Heart right ventricle (tissue), 16 donors: ENCODE measurements at regions of chr1 and their contacts with region 1.

Region 1: GRCh38 chr1:56409094-56409691 is 170.2 kb downstream of the PLPP3 start:
- DNase-seq: peak in 1 of 2 donors; percentile 17
- ATAC-seq: peak in 2 of 8 donors; percentile 22 to 41
- H3K4me3 ChIP-seq: no peak overlapping the region
- H3K27ac ChIP-seq: no peak overlapping the region
- H3K4me1 ChIP-seq: peaks cover 0 to 53% (median 14%) of the 10 kb centered on the region in 9 donors
- H3K27me3 ChIP-seq: no peaks in the 10 kb centered on the region
- CTCF ChIP-seq: peak in 8 of 9 donors; percentile 26 to 54 (median 45)

Region 2: GRCh38 chr1:56189946-56190792 is 219.0 kb before region 1 on chr1:
- intact Hi-C with region 1: loop called in 2 of 10 experiments (anchors 5 kb)
- DNase-seq: peak in 1 of 2 donors; percentile 40
- ATAC-seq: peak in 7 of 8 donors; percentile 63 to 92 (median 81)
- H3K4me3 ChIP-seq: no peak overlapping the region
- H3K27ac ChIP-seq: peak overlapping the region in 5 of 10 donors; percentile 35 to 54 (median 38)
- H3K4me1 ChIP-seq: peaks cover 0 to 39% (median 19%) of the 10 kb centered on the region in 9 donors
- H3K27me3 ChIP-seq: no peaks in the 10 kb centered on the region
- CTCF ChIP-seq: peak; percentile 11 to 70 (median 51)

Region 3: GRCh38 chr1:56284928-56285327 is 124.3 kb before region 1 on chr1:
- intact Hi-C with region 1: loop called in 2 of 10 experiments (anchors 2 to 10 kb)
- DNase-seq: peak in 1 of 2 donors; percentile 23
- ATAC-seq: peak in 7 of 8 donors; percentile 64 to 86 (median 79)
- H3K4me3 ChIP-seq: no peak overlapping the region
- H3K27ac ChIP-seq: peak overlapping the region in 7 of 10 donors; percentile 5 to 73 (median 51)
- H3K4me1 ChIP-seq: peaks cover 0 to 35% (median 18%) of the 10 kb centered on the region in 9 donors
- H3K27me3 ChIP-seq: no peaks in the 10 kb centered on the region
- CTCF ChIP-seq: no peak

Region 4: DNA sequence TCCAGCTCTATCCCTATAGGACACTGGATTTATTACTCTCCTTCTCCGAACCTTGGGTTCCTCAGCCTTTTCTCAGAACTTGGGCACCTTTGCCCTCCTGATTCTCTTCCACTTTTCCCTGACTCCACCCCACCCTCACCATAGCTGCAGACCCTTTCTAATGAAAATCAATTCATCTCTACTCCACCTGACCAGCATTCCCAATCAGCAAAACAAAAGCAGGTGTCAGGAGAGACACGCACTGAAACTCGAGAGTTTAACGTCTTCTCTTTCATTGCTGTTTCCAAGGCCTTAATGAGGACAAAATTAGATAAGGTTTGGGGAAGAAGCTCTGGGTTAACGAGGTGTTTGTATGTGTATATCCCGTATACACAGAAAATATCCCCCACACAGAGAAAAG is 38.7 kb before region 1 on chr1:
- intact Hi-C with region 1: no loop called
- DNase-seq: no peak
- ATAC-seq: no peak
- H3K4me3 ChIP-seq: no peak overlapping the region
- H3K27ac ChIP-seq: no peak overlapping the region
- H3K4me1 ChIP-seq: peaks cover 4 to 34% (median 29%) of the 10 kb centered on the region in 9 donors
- H3K27me3 ChIP-seq: no peaks in the 10 kb centered on the region
- CTCF ChIP-seq: no peak

Region 5: DNA sequence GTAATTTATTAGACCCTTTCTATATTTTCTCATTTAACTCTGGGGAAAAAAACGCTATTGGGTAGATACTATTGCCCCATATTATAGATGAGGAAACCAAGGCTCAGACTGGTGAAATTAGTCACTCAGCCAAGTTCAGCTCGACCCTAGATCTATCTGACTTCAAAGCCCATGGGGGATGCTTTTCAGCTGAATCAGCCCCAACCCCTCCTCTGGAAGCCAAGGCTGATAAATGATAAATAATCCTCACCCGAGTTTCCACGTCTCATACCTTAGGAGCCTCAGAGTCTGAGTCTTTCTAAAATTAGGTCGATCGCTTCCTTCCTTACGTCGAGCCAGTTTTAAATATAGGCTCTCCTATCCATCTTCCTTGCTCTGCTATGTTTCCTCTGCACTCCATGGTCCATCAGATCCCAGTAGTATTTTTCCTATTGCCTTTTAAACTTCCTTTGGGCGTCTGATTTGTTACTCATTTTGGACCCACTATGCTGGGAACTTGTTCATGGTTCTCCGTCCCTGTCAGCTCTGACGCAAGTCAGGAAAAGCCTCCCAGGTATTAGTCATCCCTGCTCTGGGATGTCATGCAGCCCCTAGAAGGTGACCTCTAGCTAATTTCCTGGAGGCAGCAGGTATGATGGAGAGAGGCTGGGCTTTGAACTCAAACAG is 47.4 kb after region 1 on chr1:
- intact Hi-C with region 1: loop called in 1 of 10 experiments (anchors 5 kb)
- DNase-seq: peak in 1 of 2 donors; percentile 46
- ATAC-seq: peak in 6 of 8 donors; percentile 38 to 85 (median 72)
- H3K4me3 ChIP-seq: no peak overlapping the region
- H3K27ac ChIP-seq: peak overlapping the region in 6 of 10 donors; percentile 5 to 45 (median 28)
- H3K4me1 ChIP-seq: peaks cover 5 to 43% (median 21%) of the 10 kb centered on the region in 9 donors
- H3K27me3 ChIP-seq: no peaks in the 10 kb centered on the region
- CTCF ChIP-seq: no peak